Activated T-helper 2 cell treated with anti-CD3 and anti-CD28 coated beads, Interferon-gamma antibody, Interleukin-2, Interleukin-4, amounts not matched to agents 10 μg/mL and 5 μg/mL and 100 μg/mL, durations not matched to agents 14 hours and 24 hours and 36 hours (primary cell): ENCODE measurements at regions of chr7 and their contacts with region 1.

Region 1: GRCh38 chr7:155450970-155451801 is 6.7 kb upstream of the EN2 start:
- DNase-seq: no peak
- H3K4me3 Mint-ChIP-seq: no peak overlapping the region
- H3K27ac Mint-ChIP-seq: no peak overlapping the region
- H3K4me1 Mint-ChIP-seq: peaks cover 1% of the 10 kb centered on the region
- H3K27me3 Mint-ChIP-seq: peaks cover 74% of the 10 kb centered on the region

Region 2: GRCh38 chr7:155371884-155372781 is 79.1 kb before region 1 on chr7:
- intact Hi-C with region 1: loop called (anchors 1 kb)
- DNase-seq: no peak
- H3K4me3 Mint-ChIP-seq: no peak overlapping the region
- H3K27ac Mint-ChIP-seq: no peak overlapping the region
- H3K4me1 Mint-ChIP-seq: peaks cover 23% of the 10 kb centered on the region
- H3K27me3 Mint-ChIP-seq: peaks cover 65% of the 10 kb centered on the region

Region 3: DNA sequence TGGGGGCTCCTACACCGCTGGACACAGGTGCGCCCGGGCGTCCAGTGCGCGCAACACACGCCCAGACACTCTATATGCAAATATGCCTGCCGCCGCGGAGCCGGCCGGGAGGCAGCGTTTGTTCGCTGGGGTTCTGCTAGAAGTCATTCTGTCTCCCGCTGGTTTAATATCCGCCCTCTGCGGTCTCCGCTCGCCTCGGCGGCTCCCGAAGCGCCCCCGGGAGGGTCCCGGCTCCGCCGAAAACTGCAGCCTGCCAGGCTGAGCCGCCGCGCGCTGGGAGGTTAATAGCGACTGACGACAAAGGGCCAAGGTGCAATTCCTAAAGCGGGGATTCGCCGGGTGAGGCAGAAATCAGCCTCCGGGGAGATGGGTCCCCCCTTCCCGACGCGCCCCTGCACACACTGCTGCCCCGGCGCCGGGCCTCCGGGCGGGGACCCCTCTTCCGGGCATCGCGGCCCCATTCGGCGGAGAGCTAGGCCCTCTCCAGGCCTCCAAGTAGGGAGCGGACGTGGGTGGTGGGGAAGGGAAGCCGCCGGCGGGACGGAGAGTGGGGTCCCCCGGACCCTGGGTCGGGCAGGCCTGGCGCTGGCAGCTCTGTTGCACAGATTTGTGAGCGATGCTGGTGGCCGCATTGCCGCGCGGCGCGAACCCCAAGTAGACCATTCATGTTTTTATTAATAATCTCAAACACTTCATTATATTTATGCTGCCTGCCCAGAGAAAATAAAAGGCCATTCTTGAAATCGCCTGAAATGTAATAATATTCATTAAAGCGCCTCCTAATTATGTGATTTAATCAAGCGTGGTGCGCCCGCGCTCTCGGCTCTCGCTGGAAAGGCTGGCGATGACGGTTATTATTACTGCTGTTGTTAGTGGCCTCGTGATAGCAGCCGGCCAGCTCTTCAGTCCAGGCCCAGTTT is 15.9 kb after region 1 on chr7:
- intact Hi-C with region 1: loop called (anchors 2 kb)
- DNase-seq: peak; percentile 38
- H3K4me3 Mint-ChIP-seq: no peak overlapping the region
- H3K27ac Mint-ChIP-seq: no peak overlapping the region
- H3K4me1 Mint-ChIP-seq: peaks cover 3% of the 10 kb centered on the region
- H3K27me3 Mint-ChIP-seq: peaks cover 81% of the 10 kb centered on the region